ENCODE measurements at regions of chr3 and their contacts with region 1.

Region 1: GRCh38 chr3:185764163-185764979 is 60.5 kb downstream of the IGF2BP2 start:
- DNase-seq: no peak
- H3K4me3 ChIP-seq: no peak overlapping the region
- H3K27ac ChIP-seq: peak overlapping the region in 2 of 8 donors; percentile 21 to 29
- H3K4me1 ChIP-seq: peaks cover 0 to 45% (median 18%) of the 10 kb centered on the region in 6 donors
- H3K27me3 ChIP-seq: peaks cover 0 to 5% (median 0%) of the 10 kb centered on the region in 7 donors
- CTCF ChIP-seq: no peak
- POLR2A ChIP-seq: no peak

Region 2: DNA sequence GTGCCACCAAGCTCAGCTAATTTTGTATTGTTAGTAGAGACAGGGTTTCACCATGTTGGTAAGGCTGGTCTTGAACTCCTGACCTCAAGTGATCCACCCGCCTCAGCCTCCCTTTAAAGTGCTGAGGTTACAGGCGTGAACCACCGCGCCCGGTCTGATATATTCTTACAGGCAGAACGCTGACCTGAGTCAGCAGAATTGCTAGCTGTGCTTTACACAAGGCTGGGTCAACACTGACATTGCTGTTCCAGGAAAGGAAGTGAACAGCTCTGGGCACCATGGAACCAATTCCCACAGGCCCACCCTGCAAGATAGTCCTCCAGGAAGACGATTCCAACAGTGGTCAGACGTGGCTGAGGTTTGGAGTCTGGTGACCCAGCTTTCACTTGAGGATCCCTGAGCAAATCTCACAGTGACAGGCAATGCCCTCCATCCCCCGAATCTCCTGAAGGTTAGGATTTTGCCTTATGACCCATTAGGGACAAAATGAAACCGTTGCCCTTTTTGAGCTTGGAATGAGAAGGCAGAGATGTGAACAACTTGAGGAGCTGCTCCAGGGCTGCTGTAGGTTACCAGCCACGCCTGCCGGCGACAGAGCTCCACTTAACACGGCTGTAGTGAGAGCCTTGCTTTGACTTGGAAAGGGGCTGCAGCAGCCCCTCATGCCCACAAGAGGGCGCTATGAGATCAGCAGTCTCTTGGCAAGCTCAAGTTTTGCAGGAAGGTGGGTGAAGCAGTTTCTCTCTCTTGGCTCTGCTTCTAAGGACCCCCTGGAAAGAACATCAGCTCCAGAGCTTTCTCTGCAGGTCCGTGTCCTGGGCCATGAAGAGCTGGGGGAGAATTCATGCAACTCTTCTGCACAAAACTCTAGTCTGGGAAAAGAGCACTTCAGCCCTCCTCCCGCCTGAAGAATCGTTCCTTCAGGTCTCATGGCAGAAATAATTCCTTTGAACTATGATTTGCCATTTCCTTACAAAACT is 104.1 kb before region 1 on chr3:
- intact Hi-C with region 1: loop called (anchors 2 kb)
- DNase-seq: peak; percentile 85
- H3K4me3 ChIP-seq: peak overlapping the region in 2 of 8 donors; percentile 12 to 32
- H3K27ac ChIP-seq: peak overlapping the region in 2 of 8 donors; percentile 22 to 33
- H3K4me1 ChIP-seq: peaks cover 0 to 21% (median 11%) of the 10 kb centered on the region in 6 donors
- H3K27me3 ChIP-seq: peaks cover 0 to 3% (median 0%) of the 10 kb centered on the region in 7 donors
- CTCF ChIP-seq: peak; percentile 74 to 97 (median 96)
- POLR2A ChIP-seq: no peak

Region 3: DNA sequence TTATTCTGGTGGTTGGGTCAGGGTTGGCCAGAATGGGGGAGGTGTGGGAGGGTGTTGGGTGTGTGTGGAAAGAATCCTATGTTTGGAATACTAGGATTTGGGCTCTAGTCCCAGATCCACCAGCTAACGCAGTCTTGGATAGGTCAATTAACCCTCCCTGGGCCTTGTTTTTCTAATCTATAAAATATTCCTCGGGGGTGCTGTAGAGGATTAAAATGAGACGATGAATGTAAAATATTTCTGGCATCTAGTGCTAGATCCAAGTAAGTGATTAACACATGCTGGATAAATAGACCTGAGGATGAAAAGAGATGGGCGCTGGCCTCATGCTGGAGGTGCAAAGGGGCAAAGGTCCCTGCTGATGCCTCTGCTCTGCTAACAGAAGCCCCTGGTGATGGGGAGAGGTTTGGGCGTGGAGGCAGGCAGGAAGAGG is 412.2 kb after region 1 on chr3:
- intact Hi-C with region 1: no loop called
- DNase-seq: no peak
- H3K4me3 ChIP-seq: no peak overlapping the region
- H3K27ac ChIP-seq: no peak overlapping the region
- H3K4me1 ChIP-seq: no peaks in the 10 kb centered on the region
- H3K27me3 ChIP-seq: no peaks in the 10 kb centered on the region
- CTCF ChIP-seq: no peak
- POLR2A ChIP-seq: no peak

Measured in spleen (tissue), 13 donors.